Adrenal gland (tissue), 19 donors: ENCODE measurements at regions of chr11 and their contacts with region 1.

Region 1: GRCh38 chr11:27698872-27699474 is 1.3 kb downstream of the BDNF start:
- DNase-seq: peak; percentile 66 to 81 (median 77)
- H3K4me3 ChIP-seq: peak overlapping the region in 1 of 4 donors; percentile 60
- H3K27ac ChIP-seq: no peak overlapping the region
- H3K4me1 ChIP-seq: peaks cover 21 to 25% of the 10 kb centered on the region in 2 donors
- H3K27me3 ChIP-seq: peaks cover 29% of the 10 kb centered on the region
- CTCF ChIP-seq: peak; percentile 28 to 74 (median 60)
- POLR2A ChIP-seq: no peak

Region 2: DNA sequence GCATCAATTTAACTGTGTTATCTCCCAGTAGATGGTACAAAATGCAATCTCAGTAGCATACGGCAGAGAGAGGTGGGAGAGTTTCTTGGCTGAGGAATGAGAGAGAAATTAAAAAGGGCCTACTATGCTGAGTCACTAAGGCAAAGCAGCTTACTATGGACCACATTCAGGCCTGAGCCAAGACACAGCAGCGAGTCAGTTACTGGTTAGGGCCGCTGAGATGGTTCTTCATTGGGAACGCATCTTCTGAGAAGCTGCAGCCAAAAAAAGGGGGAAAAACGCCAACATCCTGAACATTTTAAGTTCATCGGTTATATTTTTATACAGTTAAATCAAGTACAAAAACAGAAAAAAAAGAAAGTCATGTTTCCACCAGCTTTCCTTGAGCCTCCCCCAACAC is 62.4 kb after region 1 on chr11:
- intact Hi-C with region 1: no loop called
- DNase-seq: no peak
- H3K4me3 ChIP-seq: no peak overlapping the region
- H3K27ac ChIP-seq: no peak overlapping the region
- H3K4me1 ChIP-seq: no peaks in the 10 kb centered on the region
- H3K27me3 ChIP-seq: peaks cover 4% of the 10 kb centered on the region
- CTCF ChIP-seq: no peak
- POLR2A ChIP-seq: no peak

Region 3: GRCh38 chr11:27830206-27830605 is 131.2 kb after region 1 on chr11:
- intact Hi-C with region 1: no loop called
- DNase-seq: no peak
- H3K4me3 ChIP-seq: no peak overlapping the region
- H3K27ac ChIP-seq: no peak overlapping the region
- H3K4me1 ChIP-seq: no peaks in the 10 kb centered on the region
- H3K27me3 ChIP-seq: no peaks in the 10 kb centered on the region
- CTCF ChIP-seq: no peak
- POLR2A ChIP-seq: no peak

Region 4: DNA sequence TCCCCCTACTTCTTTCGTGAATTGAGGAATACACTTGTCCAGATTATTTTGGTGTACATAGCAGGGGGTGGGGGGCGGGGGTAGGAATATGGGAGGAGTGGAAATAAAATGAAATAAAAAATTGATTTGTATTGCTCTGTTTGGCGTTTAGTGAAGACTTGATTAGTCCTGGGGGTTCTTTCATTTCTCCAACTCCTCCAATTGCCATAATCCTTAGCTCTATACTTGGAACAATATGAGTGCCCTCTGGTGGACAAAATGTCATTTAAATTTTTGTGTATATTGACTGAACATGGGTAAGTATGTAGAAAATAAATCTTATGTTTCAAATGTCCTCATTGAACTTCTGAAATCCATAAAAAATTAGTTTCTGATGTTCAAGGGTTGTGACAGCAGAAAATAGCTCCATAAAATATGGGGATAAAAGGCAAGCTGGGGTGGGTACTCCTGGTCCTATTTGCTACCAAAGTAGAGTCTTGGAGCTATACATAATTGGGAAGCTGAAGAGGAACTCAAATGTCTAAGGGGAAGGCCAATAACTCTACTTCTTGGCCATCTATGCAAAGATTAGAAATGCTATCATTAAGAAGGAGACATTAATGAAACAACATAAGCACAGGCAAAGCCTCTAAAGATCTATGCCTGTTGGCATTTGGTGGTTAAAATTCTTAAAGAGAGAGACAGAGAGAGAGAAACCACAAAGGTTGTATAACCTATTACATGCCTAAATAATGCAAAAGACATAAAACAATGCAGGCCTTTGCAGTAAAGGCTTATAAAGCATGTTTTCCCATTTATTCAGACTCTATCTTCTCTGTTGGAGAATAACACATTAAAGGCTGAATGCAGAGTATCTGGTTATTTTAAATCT is 830.8 kb after region 1 on chr11:
- intact Hi-C with region 1: loop called in 1 of 2 experiments (anchors 5 kb)
- DNase-seq: no peak
- H3K4me3 ChIP-seq: no peak overlapping the region
- H3K27ac ChIP-seq: no peak overlapping the region
- H3K4me1 ChIP-seq: no peaks in the 10 kb centered on the region
- H3K27me3 ChIP-seq: no peaks in the 10 kb centered on the region
- CTCF ChIP-seq: peak; percentile 39 to 56 (median 42)
- POLR2A ChIP-seq: no peak

Region 5: GRCh38 chr11:28701760-28702449 is 1002.9 kb after region 1 on chr11:
- intact Hi-C with region 1: loop called in 1 of 2 experiments (anchors 5 kb)
- DNase-seq: peak; percentile 19 to 57 (median 44)
- H3K4me3 ChIP-seq: no peak overlapping the region
- H3K27ac ChIP-seq: no peak overlapping the region
- H3K4me1 ChIP-seq: no peaks in the 10 kb centered on the region
- H3K27me3 ChIP-seq: no peaks in the 10 kb centered on the region
- CTCF ChIP-seq: no peak
- POLR2A ChIP-seq: no peak

Region 6: GRCh38 chr11:29159552-29160465 is 1460.8 kb after region 1 on chr11:
- intact Hi-C with region 1: loop called in 1 of 2 experiments (anchors 5 kb)
- DNase-seq: peak; percentile 24 to 61 (median 42)
- H3K4me3 ChIP-seq: no peak overlapping the region
- H3K27ac ChIP-seq: no peak overlapping the region
- H3K4me1 ChIP-seq: no peaks in the 10 kb centered on the region
- H3K27me3 ChIP-seq: no peaks in the 10 kb centered on the region
- CTCF ChIP-seq: peak; percentile 26 to 56 (median 44)
- POLR2A ChIP-seq: no peak